ENCODE measurements at regions of chr10 and their contacts with region 1.

Region 1: GRCh38 chr10:57338823-57339558 is 928.7 kb downstream of the IPMK start:
- DNase-seq: no peak
- ATAC-seq: no peak

Region 2: GRCh38 chr10:57482259-57482658 is 143.3 kb after region 1 on chr10:
- intact Hi-C with region 1: no loop called
- DNase-seq: no peak
- ATAC-seq: no peak

Region 3: GRCh38 chr10:57849691-57850357 is 510.8 kb after region 1 on chr10:
- intact Hi-C with region 1: loop called in 1 of 2 experiments (anchors 10 kb)
- DNase-seq: no peak
- ATAC-seq: no peak

Region 4: DNA sequence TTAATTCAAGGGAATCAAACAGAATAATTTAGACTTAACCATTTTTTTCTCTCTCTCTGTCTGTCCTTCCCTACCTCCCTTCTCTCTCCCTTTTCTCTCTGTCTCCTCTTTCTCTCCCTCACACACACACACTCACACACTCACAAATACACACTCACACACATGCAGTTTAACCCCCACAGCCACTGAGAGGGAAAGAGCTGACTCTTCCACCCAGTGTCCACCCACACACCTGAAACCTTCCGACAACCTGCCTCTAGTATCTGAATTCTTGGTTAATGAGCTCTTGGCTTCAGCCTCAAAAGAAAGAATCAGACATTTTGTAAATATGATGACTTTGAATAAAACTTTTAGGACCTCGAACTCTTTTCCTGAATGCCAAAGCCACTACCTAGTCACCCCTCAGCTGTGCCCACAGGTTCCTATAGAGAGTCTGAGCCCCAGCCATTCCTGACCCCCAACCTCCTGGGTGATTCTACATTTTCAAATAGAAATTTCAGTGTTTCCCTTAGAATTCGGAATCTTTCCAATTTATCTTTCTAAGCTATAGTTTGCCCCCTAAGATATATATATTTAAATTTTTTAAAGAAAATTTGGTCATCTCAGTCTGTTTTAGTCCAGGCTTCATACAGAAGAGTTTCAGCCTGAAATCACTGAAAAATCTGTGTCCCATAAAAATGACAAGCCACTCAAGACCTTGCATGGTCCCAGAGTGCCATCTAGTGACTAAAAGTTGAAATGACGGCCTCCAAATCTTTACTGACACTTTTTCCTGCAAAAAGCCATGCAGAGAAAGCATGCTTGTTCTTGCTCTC is 725.9 kb after region 1 on chr10:
- intact Hi-C with region 1: loop called in 1 of 2 experiments (anchors 5 kb)
- DNase-seq: no peak
- ATAC-seq: no peak

Measured in left cardiac atrium (tissue), 4 donors.